ENCODE measurements at regions of chr1 and their contacts with region 1.

Region 1: GRCh38 chr1:110209715-110210603 is at the start of gene KCNC4:
- DNase-seq: peak; percentile 36
- H3K4me3 ChIP-seq: peak within 1 kb of the TSS; percentile 52
- H3K27me3 ChIP-seq: no peaks in the 10 kb centered on the region
- CTCF ChIP-seq: no peak
- polyA plus RNA-seq, gene KCNC4: 1.6 and 2.6 TPM in 2 replicates

Region 2: GRCh38 chr1:109895720-109896504 is 314.0 kb before region 1 on chr1:
- CTCF ChIA-PET with region 1: no interaction called
- POLR2A ChIA-PET with region 1: no interaction called
- DNase-seq: no peak
- H3K4me3 ChIP-seq: no peak overlapping the region
- H3K27me3 ChIP-seq: no peaks in the 10 kb centered on the region
- CTCF ChIP-seq: no peak

Region 3: DNA sequence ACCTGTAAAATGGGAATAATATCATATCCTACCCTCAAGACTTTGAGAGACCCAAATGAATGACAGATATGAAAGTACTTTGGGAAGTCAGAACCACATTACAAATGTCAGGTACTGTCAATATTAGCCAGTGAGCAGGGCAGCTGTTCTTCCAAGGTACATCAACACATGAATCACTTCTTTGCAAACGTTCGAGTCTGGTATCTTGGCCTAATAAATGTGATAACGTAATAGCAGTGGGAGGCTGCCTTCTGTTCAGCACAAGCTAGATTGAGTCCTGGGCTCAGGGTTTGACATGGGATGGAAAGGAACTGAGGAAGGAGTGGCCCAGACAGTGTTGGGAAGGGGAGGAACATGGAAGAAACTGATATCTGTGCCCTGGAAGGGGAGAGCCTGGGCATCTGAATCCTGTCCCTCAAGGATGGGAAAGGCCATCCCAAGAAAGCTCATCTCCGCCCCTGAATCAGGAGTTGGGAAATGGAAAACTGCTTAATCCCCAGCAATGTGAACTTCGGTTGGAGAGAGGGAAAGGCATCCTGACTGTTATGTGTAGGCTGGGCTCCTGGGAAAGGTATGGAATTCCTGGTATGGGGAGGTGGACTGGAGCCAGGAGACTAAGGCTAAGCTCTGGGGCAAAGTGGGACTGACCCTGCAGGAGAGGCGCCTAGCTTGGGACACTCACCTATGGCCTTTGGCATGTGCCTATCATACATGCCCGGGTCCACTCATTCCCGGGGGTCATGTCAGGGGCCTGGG is 14.5 kb after region 1 on chr1:
- CTCF ChIA-PET with region 1: interaction called, 12 read pairs
- POLR2A ChIA-PET with region 1: no interaction called
- DNase-seq: no peak
- H3K4me3 ChIP-seq: no peak overlapping the region
- H3K27me3 ChIP-seq: no peaks in the 10 kb centered on the region
- CTCF ChIP-seq: no peak

Region 4: GRCh38 chr1:110243574-110243973 is 33.6 kb after region 1 on chr1:
- CTCF ChIA-PET with region 1: interaction called, 12 read pairs
- POLR2A ChIA-PET with region 1: no interaction called
- DNase-seq: no peak
- H3K4me3 ChIP-seq: no peak overlapping the region
- H3K27me3 ChIP-seq: no peaks in the 10 kb centered on the region
- CTCF ChIP-seq: no peak

Region 5: GRCh38 chr1:110312188-110313121 is 102.5 kb after region 1 on chr1:
- CTCF ChIA-PET with region 1: interaction called, 1,014 read pairs
- POLR2A ChIA-PET with region 1: interaction called, 3 read pairs
- DNase-seq: peak; percentile 13
- H3K4me3 ChIP-seq: no peak overlapping the region
- H3K27me3 ChIP-seq: no peaks in the 10 kb centered on the region
- CTCF ChIP-seq: peak; percentile 97

Region 6: DNA sequence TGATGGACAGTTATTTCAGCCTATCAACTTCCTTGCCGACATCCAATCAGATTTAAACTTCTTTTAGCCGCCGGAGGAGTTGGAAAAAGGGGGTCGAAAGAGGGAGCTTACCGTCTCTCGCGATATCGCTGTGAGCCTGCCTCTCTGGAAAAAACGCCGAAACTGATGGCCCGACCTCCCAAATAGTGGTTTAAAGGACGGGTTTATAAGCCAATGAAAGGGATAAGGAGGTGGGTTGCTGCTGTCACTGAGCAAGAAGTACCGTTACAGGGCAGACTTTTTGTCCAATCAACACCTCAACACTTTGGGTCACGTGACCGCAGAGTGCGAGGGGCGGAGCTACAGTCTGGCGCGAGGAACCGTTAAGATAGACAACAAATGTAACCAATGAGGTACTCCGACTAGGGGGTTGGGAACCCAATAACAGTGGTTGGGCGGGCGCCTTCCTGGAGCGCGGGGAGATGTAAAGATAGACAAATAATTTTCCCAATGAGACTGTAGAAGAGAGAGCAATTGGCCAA is 129.0 kb after region 1 on chr1 and contains the start of gene RBM15:
- CTCF ChIA-PET with region 1: interaction called, 77 read pairs
- POLR2A ChIA-PET with region 1: interaction called, 3 read pairs
- DNase-seq: peak; percentile 100
- H3K4me3 ChIP-seq: peak within 1 kb of the TSS; percentile 96
- H3K27me3 ChIP-seq: no peaks in the 10 kb centered on the region
- CTCF ChIP-seq: no peak
- polyA plus RNA-seq, gene RBM15: 9.7 and 10.2 TPM in 2 replicates

Region 7: DNA sequence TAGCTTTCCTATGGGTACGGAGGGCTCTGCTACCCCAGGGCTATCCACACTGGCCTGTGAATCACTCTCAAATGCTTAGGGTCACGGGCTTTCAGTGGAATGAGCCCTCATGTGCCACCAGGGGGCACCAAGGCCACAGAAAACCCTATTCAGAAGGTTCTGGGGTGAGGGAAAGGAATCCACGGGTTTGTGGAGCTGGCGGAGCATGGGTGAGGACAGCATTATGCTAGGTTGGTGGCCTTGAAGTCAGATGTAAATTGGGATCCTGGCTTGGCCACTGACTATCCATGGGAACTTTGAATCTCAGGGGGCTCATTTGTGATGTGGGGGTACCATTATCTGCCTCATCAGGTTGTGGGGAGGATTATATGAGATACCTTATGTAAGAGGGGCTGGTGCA is 202.6 kb after region 1 on chr1:
- CTCF ChIA-PET with region 1: interaction called, 25 read pairs
- POLR2A ChIA-PET with region 1: interaction called, 3 read pairs
- DNase-seq: no peak
- H3K4me3 ChIP-seq: no peak overlapping the region
- H3K27me3 ChIP-seq: peaks cover 3% of the 10 kb centered on the region; the same call in 1 of the 2 replicates
- CTCF ChIP-seq: peak; percentile 88

Region 8: GRCh38 chr1:110433803-110434202 is 223.8 kb after region 1 on chr1:
- CTCF ChIA-PET with region 1: no interaction called
- POLR2A ChIA-PET with region 1: no interaction called
- DNase-seq: no peak
- H3K4me3 ChIP-seq: no peak overlapping the region
- H3K27me3 ChIP-seq: peaks cover 7% of the 10 kb centered on the region
- CTCF ChIP-seq: peak; percentile 44

Measured in BJ (cell line).